Vagina (tissue), 2 donors: ENCODE measurements at regions of chr14 and their contacts with region 1.

Region 1: DNA sequence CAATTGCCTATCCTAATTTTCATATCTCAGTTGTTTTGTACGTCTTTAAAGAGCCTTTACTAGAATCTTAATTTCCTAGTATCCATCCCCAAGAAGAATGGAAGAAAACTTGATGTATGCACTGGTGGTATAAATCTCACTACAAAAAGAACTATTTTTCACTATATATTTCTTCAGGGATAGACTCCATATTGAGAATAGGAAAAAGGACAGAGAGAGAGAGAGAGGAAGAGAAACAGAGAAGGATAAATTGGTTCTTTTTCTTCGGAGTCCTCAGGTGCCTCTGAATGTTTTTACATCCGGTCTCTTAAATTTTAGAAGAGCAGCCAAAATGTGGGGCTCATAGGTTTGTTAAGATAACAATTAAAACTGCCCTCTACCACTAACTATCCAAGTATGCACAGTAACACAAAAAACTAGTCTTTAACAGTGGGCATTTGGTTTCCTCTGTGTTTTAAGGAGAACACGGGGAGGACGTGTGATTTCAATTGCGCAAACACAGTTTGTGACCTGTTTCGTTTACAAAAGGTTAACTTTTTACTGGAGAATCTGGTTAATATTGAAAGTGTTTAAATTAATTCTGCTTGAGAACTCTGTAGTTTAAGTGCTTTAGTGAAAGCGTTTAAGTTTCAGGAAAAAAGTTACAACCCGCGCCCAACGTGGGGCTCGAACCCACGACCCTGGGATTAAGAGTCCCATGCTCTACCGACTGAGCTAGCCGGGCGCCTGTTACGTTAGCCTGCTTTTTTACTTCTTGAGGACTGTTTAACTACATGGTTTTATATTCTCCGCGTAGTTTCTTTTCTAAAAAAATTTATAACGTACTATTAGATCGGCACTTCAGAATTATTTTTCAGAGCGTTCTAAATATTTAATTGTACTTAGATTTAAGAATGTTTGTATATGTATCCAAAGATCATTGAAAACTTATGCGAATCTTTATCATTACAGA is 5.1 kb upstream of the PSMA3 start:
- DNase-seq: peak in 1 of 2 donors; percentile 90
- H3K4me3 ChIP-seq: peak overlapping the region; percentile 55 to 56
- H3K27ac ChIP-seq: peak overlapping the region; percentile 82
- H3K4me1 ChIP-seq: peaks cover 7% of the 10 kb centered on the region
- H3K27me3 ChIP-seq: no peaks in the 10 kb centered on the region
- CTCF ChIP-seq: no peak
- POLR2A ChIP-seq: no peak

Region 2: DNA sequence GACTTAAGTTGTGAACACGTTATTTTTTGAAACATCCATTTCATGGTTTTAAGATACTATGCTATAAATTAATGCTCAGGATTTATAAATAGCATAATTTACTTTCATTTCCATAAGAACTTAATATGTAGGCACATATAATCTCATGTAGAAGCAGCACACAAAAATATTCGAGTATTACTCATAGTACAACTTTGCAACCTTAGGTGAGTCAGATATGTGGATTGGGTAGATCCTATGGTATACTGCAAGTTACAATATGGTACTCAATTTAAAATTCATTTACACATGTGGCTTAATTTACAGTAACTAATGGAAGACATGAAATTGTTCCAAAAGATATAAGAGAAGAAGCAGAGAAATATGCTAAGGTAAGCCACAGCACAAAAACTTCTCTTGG is 31.1 kb after region 1 on chr14:
- intact Hi-C with region 1: no loop called
- DNase-seq: no peak
- H3K4me3 ChIP-seq: no peak overlapping the region
- H3K27ac ChIP-seq: no peak overlapping the region
- H3K4me1 ChIP-seq: peaks cover 6% of the 10 kb centered on the region
- H3K27me3 ChIP-seq: no peaks in the 10 kb centered on the region
- CTCF ChIP-seq: no peak
- POLR2A ChIP-seq: no peak

Region 3: DNA sequence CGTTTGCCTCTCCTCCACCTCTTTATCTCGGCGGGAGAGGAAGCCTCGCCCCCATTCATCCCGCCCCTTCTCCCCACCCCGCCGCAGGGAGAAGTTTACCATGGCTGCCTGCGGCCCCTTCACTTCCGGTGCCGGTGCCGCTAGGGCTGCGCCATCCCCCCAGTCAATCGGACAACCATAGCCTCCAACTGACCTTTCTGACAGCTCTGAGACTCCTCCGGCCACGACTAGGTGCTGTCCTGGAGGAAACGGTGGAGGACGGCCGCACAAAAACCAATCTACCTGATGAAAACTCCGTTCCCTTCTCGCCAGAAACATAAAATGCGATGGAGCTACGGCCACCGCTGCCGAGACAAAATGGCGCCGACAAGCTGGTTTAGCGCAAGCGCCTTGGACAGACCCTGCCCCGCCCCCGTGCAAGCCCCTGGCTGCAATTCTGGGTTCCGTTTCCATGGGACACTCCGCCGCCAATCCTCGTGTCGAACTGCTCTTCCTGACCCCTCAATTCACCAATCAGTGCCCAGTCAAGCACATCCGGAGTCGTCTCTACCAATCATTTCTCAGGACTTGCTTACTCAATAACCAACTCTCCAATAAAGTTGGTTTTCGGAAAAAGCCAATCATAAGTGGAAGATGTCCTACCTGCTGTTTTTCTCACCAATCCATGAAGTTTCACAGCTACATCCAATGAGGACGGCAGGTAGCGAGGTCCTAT is 58.4 kb after region 1 on chr14:
- intact Hi-C with region 1: loop called (anchors 2 kb)
- DNase-seq: peak; percentile 98 to 100
- H3K4me3 ChIP-seq: peak overlapping the region; percentile 68 to 98
- H3K27ac ChIP-seq: peak overlapping the region; percentile 97
- H3K4me1 ChIP-seq: peaks cover 63% of the 10 kb centered on the region
- H3K27me3 ChIP-seq: no peaks in the 10 kb centered on the region
- CTCF ChIP-seq: peak in 1 of 3 experiments; percentile 6
- POLR2A ChIP-seq: peak in 1 of 2 donors; percentile 74

Region 4: DNA sequence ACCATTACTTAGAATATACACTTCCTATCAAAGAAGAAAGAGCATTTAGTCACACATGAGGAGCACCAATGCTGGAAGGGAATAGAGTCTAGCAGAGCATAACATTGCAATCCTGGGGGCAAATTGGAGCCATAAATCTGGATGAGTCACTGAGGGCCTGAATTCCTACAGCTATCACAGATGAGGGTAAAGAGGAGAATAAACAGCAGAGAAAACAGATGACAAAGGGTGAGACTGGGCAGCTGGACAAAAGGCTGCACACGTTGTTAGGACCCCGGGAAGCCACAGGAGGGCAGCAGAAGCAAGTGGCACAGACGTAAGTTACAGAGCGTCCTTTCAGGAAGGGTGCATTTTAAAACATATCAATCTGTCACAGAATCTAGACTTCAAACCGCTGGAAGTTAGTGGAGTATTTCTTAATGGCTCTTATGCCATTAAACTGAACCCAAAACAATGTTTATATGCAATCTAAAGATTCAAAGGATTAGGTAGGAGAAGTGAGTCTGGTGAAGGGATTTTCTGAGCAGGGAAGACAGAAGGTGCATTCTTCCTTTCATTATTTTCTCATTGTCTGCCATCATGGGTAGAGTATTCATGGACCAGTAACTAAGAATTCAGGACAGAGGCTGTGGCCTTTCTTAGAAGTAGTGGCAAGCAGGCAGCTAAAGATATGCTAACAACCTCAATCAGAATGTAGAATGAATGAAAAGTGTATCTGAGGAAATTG is 789.1 kb after region 1 on chr14:
- intact Hi-C with region 1: no loop called
- DNase-seq: no peak
- H3K4me3 ChIP-seq: no peak overlapping the region
- H3K27ac ChIP-seq: no peak overlapping the region
- H3K4me1 ChIP-seq: no peaks in the 10 kb centered on the region
- H3K27me3 ChIP-seq: no peaks in the 10 kb centered on the region
- CTCF ChIP-seq: peak; percentile 28 to 56 (median 35)
- POLR2A ChIP-seq: no peak